Sigmoid colon (tissue), 7 donors: ENCODE measurements at regions of chr4 and their contacts with region 1.

Region 1: DNA sequence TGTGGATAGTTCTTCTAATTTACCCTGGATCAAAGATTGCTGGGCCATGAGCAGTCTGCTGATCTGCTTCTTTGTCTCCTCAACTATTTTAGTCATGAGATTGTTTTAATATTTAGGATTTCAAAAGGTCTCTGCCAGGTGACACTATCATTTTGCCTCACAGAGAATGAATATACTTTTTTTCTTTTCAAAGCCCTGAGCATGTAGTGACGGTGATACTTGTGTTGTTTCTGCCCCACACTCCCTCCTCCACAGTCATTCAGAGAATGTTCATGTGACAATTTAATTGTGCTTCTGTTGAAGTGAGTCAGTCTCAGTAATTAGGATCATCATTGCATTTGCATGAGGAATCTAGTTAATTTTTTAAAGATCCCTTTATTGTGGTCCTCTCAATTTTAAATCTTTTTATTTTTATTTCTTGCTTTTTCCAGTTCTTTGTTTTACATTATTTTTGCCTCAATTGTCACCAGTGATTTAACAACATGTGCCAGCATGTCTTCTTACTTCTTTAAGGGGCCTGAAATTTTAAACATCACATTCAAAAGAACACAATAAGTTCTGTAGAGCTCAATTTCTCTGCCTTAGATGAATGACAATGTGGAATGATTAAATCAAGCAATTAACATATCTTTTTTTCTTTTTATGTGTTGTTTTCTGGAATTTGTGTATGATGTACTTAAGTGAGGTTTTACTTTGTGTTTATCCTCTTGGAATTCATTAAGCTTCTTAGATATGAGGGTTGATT is 12.3 kb downstream of the MMRN1 start:
- DNase-seq: no peak
- H3K4me3 ChIP-seq: no peak overlapping the region
- H3K27ac ChIP-seq: no peak overlapping the region
- H3K4me1 ChIP-seq: no peaks in the 10 kb centered on the region
- H3K27me3 ChIP-seq: no peaks in the 10 kb centered on the region
- CTCF ChIP-seq: no peak
- EP300 ChIP-seq: no peak
- POLR2A ChIP-seq: no peak

Region 2: DNA sequence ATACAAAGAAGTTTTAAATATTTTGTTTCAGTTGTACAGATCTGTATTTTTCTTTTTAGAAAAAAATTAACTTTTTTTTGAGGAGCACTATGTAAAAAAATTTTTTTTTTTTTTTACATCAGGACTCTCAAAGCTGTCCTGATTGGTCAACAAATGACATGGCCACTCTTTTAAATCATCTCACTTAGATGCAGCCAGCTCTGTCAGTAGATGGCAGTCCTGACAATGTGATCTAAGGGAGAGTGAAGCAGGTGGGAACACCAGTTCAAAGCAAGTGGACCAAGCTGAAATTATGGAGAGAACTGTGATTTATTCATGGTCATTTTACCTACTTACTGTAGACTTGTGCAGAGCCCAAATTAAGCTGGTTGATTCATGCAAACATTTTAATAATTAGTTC is 424.7 kb before region 1 on chr4:
- intact Hi-C with region 1: loop called (anchors 10 kb)
- DNase-seq: no peak
- H3K4me3 ChIP-seq: no peak overlapping the region
- H3K27ac ChIP-seq: no peak overlapping the region
- H3K4me1 ChIP-seq: no peaks in the 10 kb centered on the region
- H3K27me3 ChIP-seq: no peaks in the 10 kb centered on the region
- CTCF ChIP-seq: no peak
- EP300 ChIP-seq: no peak
- POLR2A ChIP-seq: no peak

Region 3: DNA sequence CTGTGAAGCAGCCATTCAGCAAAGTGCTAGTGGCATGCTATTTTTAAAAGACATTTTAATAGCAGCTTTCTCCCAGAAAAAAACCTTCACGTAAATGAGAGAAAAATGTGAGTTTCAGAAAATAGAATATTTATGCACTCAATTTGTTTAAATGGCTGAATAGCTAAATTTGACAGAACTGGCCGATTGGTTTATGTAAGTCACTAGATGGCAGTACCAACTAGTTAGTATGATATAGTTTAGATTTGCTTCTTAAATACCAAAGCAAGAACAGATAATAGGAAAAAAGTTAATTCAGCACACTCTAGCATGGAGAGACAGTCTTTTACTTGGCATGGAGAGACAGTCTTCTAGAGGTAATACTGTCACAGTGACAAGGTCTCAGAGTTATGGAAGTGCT is 320.1 kb before region 1 on chr4:
- intact Hi-C with region 1: loop called (anchors 5 kb)
- DNase-seq: no peak
- H3K4me3 ChIP-seq: no peak overlapping the region
- H3K27ac ChIP-seq: no peak overlapping the region
- H3K4me1 ChIP-seq: peaks cover 0 to 7% (median 0%) of the 10 kb centered on the region in 4 donors
- H3K27me3 ChIP-seq: no peaks in the 10 kb centered on the region
- CTCF ChIP-seq: no peak
- EP300 ChIP-seq: no peak
- POLR2A ChIP-seq: no peak